ENCODE measurements at regions of chr7 and their contacts with region 1.

Region 1: DNA sequence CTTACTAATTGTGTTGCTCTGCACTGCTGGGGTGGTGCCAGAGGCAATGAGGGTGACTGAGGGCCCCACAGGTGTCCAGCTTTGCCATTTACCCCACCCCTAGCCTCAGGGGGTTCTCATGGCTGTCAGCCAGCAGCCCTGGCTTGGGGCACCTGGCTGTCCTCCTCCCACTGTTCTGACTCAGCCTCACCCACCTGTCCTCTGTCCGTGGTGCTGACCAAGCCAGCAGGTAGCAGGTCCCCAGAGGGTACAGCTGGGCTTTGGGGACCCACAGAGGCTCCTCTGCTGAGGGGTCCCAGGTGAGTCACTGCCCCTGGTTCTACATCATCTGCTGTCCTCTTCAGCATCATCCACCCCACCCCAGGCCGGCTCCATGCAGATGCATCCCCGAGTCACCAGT is 32.2 kb upstream of the ZNF716 start:
- DNase-seq: no peak
- ATAC-seq: no peak
- H3K4me3 ChIP-seq: no peak overlapping the region
- H3K4me3 Mint-ChIP-seq: no peak overlapping the region
- H3K27ac ChIP-seq: no peak overlapping the region
- H3K27ac Mint-ChIP-seq: no peak overlapping the region
- H3K4me1 ChIP-seq: no peaks in the 10 kb centered on the region
- H3K4me1 Mint-ChIP-seq: no peaks in the 10 kb centered on the region
- H3K27me3 ChIP-seq: no peaks in the 10 kb centered on the region
- H3K27me3 Mint-ChIP-seq: no peaks in the 10 kb centered on the region
- CTCF ChIP-seq: no peak

Region 2: GRCh38 chr7:57343901-57344622 is 73.7 kb before region 1 on chr7:
- CTCF ChIA-PET with region 1: no interaction called
- POLR2A ChIA-PET with region 1: no interaction called
- intact Hi-C with region 1: no loop called
- DNase-seq: no peak
- ATAC-seq: no peak
- H3K4me3 ChIP-seq: no peak overlapping the region
- H3K4me3 Mint-ChIP-seq: no peak overlapping the region
- H3K27ac ChIP-seq: no peak overlapping the region
- H3K27ac Mint-ChIP-seq: no peak overlapping the region
- H3K4me1 ChIP-seq: no peaks in the 10 kb centered on the region
- H3K4me1 Mint-ChIP-seq: no peaks in the 10 kb centered on the region
- H3K27me3 ChIP-seq: no peaks in the 10 kb centered on the region
- H3K27me3 Mint-ChIP-seq: no peaks in the 10 kb centered on the region
- CTCF ChIP-seq: no peak

Region 3: DNA sequence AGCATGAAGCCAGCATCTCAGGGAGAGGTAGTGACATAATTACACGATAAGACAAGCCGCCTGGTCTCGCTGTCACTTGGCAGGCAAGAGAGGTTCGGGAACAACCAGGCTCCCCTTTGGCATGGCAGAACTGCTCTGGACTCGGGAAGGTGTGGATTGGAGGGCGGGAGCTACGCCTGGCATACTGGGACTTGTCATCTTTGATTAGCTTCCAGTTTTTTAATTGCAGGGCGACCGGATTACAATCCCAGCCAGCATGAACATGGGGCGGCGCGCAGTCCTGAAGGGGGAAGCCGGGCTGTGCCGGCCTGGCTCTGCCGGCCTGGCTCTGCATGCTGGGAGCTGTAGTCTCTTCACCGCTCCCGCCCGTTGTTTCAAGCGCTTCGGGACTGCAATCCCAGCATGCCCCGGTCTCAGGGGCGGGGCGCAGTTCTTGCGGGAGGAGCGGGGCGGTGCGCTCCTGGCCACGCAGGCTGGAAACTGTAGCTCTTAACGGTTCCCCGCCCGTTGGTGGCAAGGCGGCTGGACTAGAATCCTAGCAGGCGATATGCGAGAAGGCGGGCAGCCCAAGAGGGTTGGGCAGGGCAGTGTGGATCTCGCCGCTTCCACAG is 13.3 kb before region 1 on chr7:
- CTCF ChIA-PET with region 1: no interaction called
- POLR2A ChIA-PET with region 1: no interaction called
- intact Hi-C with region 1: loop called (anchors 1 kb)
- DNase-seq: no peak
- ATAC-seq: no peak
- H3K4me3 ChIP-seq: no peak overlapping the region
- H3K4me3 Mint-ChIP-seq: no peak overlapping the region
- H3K27ac ChIP-seq: no peak overlapping the region
- H3K27ac Mint-ChIP-seq: no peak overlapping the region
- H3K4me1 ChIP-seq: no peaks in the 10 kb centered on the region
- H3K4me1 Mint-ChIP-seq: no peaks in the 10 kb centered on the region
- H3K27me3 ChIP-seq: no peaks in the 10 kb centered on the region
- H3K27me3 Mint-ChIP-seq: no peaks in the 10 kb centered on the region
- CTCF ChIP-seq: no peak

Measured in B cell (primary cell).